Left ventricle myocardium superior (tissue), 1 donor: ENCODE measurements at regions of chr3 and their contacts with region 1.

Region 1: DNA sequence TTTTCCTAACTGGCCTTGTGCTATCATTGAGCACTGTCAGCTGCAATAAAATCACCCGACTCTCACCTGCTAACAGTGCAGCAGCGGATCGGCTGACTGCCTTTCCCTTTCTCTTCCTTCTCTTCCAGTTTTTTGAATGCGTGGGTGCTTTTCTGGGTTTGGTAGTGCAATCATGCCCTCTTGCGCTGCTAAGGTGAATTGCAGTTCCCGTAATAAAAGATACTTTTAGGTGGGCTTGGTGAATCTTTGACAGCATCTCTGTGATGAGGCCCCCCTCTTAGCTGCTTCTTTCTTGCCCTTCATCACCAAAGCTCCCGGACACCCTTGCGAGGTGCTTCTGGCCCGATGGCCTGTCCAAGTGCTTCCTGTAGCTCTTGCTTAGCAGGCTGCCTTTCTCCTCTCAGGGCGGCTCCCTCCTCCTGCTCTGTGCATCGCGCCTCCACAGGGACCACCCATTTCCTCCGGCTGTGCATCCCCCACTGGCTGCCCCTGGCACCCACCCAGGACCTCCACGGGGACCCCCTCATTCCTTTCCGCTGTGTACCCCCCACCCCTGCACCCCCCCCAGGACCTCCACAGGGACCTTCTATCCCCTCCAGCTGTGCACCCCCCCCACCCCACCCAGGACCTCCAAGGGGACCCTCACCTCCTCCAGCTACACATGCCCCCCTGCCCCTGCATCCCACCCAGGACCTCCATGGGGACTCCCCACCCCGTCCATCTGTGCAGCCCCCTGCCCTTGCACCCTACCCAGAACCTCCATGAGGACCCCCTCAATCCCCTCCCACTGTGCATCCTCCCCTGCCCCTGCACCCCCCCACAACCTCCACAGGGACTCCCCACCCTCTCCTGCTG is 50.8 kb upstream of the RPL32 start:
- DNase-seq: no peak
- ATAC-seq: peak; percentile 44

Region 2: DNA sequence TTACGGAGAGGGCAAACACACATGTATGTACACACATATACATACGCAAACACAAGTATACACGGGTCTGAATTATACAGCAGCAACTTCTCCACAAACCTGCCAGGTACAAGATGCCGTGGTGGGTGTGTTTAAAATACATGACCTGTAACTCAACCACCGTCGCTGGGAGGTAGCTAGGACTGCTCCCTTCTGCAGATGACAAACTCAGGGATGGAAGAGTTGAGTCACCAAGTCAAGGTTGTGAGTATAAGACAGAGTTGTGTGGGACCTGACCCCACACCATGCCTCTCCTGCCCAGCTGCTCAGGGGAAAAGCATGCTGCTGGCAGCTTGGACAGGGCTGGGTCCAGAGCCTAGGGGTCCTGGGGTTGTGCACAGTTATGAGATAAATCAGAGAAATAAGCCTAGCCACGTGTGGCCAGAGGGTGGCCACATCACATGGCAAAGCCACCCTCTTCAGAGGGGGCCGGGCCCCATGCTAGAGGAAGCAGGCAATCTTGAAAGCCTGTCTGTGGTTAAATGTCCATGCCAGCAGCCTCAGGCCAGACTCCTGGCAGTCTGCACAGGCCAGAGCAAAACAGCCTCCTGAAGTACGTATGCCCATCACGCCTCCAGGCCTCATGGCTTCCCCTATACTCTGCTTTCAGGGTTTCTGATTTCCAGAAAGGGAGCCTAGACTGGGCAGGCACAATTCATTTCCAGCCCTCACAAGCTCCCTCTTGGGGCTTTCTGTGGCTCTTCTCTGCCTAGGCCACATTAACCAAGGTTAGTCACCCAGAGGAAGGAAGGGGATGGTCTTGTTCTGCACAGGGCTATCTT is 56.9 kb after region 1 on chr3:
- intact Hi-C with region 1: no loop called
- DNase-seq: peak; percentile 37
- ATAC-seq: peak; percentile 7

Region 3: DNA sequence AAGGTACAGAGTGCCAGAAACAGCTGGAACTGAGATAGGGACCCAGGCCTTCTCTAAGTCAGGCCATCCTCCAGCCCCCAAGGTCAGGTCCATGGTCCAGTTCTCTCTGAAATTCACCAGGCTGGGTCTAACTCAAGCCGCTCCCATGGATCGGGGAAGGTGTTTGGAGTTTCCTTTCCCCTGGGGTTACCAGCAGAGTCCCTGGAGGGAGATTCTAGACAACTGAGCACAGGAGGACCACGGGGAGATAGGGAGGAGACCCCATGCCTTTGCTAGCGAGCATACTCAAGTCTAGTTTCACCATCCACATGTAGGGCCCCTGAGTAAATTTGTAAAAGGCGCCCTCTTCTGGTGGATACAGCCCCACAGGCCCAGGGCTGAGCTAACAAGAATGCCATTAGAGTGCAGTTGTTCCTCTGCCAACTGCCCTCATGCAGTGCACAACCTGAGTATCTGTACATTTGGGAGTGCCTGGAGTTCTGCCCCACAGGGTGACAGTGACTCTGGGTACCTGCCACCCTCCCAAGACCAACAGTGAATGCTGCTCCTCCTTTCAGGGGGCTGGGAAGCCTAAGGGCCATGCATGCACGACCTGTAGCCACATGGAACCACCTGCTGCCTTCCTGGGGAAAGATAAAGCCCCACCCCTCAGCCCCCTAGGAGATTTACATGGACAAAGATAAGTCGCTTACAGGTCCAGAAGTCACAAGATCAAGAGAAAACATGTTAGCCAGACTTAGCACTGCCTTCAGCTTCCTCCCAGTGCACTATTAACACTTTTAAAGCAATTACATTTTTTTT is 92.0 kb after region 1 on chr3:
- intact Hi-C with region 1: loop called (anchors 10 kb)
- DNase-seq: peak; percentile 71
- ATAC-seq: peak; percentile 84